ENCODE measurements at regions of chr1 and their contacts with region 1.

Region 1: DNA sequence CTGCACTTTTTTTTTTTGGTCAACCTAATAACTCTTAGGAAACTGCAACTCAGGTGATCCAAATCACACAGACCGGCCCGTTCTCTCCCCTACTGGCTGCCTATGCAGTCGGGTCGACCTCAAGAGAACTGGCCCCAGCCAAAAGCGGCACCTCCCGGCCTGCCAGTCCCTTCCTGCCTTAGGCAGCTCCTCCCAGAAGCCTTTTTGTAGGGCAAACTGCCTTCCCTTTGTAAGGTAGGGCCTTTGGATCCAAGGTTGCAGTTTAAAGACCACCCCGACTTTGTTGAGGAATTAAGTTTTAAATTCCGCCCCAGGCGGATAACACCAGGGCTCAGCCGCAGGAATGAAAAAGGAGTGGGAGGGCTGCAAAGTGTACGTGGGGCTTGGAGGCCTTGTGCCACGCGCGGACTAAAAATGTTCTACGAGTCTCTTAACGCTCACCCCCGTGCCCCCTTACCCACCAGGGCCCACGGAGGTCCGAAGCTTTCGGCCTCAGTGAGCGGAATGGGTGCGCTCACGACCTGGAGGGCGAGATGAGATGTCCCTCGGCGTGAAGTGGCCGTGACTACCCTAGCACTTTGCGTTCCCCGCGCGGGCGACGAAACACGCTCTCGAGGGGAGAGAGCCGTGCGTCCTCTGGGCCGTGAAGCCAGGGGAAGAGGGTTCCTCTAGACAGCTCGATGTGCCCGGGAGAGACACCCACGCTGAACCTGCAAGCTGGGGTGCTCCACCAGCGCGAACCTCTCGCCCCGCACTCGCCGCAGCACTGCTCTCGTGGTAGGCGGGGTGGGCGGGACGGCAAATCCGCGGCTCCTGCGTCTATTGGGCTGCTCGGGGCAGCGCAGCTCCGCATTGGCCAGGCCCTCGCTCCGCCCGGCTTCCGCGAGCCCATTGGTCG is 489 bp upstream of the ST3GAL3 start:
- DNase-seq: peak; percentile 89
- H3K4me3 ChIP-seq: peak overlapping the region; percentile 65 to 89 (median 67)
- H3K27ac ChIP-seq: peak overlapping the region; percentile 8
- H3K4me1 ChIP-seq: peaks cover 33% of the 10 kb centered on the region
- H3K27me3 ChIP-seq: no peaks in the 10 kb centered on the region
- CTCF ChIP-seq: no peak

Region 2: DNA sequence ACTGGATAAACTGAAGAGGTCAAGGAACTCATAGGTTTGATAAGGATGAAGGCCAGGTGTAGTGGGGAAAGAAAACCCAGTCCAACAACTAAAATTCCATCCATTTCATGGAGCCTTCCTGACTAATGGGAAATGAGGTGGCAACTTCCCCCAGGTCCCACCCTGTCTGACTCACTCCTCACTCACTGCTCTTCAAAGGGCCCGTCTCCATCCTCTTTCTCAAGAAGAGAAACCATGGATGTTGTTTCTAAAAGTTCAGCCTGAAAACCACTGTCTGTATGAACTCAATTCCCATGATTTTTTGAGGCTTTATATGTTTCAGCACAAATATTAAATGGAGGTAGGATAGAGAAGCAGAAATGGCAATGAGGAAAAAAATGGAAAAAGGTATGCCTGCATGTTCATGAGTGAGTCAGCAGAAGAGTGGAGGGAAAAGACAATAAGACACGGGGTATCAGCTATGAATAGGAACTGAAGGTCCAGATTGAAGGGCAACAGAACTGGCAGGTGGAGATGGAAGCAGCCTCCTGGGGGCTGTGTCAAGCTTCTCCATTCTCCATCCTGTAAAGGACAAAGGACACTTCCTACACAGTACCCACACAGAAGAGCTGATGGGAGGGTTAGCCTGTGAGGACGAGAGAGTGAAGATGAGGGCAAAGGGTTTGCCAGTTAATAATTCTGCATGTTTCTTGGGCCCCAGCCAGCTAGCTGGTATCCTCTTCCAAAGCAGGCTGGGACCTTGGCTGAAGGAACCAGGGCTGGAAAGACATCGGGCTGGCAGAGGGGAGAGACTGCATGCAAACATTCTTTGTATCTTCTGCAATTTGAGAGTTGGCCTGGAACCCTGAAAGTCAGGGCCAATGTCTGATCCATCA is 333.5 kb before region 1 on chr1:
- CTCF ChIA-PET with region 1: no interaction called
- dilution Hi-C with region 1: no loop called
- in situ Hi-C with region 1: no loop called
- intact Hi-C with region 1: loop called (anchors 10 kb)
- DNase-seq: peak; percentile 92
- H3K4me3 ChIP-seq: no peak overlapping the region
- H3K27ac ChIP-seq: peak overlapping the region; percentile 80
- H3K4me1 ChIP-seq: peaks cover 41% of the 10 kb centered on the region
- H3K27me3 ChIP-seq: no peaks in the 10 kb centered on the region
- CTCF ChIP-seq: no peak

Region 3: GRCh38 chr1:43402089-43402865 is 304.6 kb before region 1 on chr1:
- CTCF ChIA-PET with region 1: no interaction called
- dilution Hi-C with region 1: no loop called
- in situ Hi-C with region 1: no loop called
- intact Hi-C with region 1: no loop called
- DNase-seq: no peak
- H3K4me3 ChIP-seq: no peak overlapping the region
- H3K27ac ChIP-seq: no peak overlapping the region
- H3K4me1 ChIP-seq: peaks cover 6% of the 10 kb centered on the region
- H3K27me3 ChIP-seq: no peaks in the 10 kb centered on the region
- CTCF ChIP-seq: no peak

Region 4: DNA sequence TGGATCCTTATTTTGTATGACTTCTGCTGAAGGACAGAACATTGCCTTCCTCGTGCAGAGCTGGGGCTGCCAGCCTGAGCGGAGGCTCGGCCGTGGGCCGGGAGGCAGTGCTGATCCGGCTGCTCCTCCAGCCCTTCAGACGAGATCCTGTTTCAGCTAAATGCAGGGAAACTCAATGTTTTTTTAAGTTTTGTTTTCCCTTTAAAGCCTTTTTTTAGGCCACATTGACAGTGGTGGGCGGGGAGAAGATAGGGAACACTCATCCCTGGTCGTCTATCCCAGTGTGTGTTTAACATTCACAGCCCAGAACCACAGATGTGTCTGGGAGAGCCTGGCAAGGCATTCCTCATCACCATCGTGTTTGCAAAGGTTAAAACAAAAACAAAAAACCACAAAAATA is 84.4 kb before region 1 on chr1:
- CTCF ChIA-PET with region 1: no interaction called
- dilution Hi-C with region 1: loop called (anchors 5 kb)
- in situ Hi-C with region 1: no loop called
- intact Hi-C with region 1: no loop called
- DNase-seq: no peak
- H3K4me3 ChIP-seq: no peak overlapping the region
- H3K27ac ChIP-seq: no peak overlapping the region
- H3K4me1 ChIP-seq: no peaks in the 10 kb centered on the region
- H3K27me3 ChIP-seq: no peaks in the 10 kb centered on the region
- CTCF ChIP-seq: no peak

Region 5: DNA sequence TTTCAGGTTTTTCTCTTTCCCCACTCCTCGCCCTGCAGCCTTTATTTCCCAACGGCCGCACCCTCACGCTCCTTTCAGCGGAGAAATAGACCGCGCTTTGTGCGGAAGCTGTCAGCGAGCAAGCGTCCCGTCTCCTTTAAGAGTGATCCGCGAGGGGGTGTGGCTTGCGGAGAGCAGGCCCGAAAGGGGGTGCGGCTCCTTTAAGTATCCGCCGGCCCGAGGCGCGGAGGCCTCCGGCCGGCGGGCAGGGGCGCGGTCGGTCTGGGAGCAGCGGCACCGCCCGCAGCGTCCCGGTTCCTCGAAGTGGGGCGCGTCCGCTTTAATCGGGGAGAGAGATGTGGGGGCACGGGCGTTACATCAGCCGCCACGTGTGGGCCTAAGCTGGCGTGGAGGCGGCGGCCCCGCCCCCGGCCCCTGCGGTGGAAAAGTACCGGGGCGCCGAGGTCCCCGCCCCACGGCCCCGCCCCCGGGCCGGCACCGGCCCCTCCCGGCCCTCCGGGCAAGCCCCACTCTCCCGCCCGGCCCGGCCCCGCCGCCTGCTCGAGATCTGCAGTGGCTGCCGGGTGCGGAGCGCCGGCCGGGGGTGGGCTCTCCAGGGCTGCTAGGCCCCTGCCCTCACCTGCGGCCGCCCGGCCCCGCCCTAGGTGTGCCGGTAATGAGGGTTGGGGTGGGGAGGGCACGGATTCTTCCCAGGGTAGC is 323.2 kb after region 1 on chr1:
- CTCF ChIA-PET with region 1: no interaction called
- dilution Hi-C with region 1: no loop called
- in situ Hi-C with region 1: no loop called
- intact Hi-C with region 1: loop called (anchors 5 kb)
- DNase-seq: peak; percentile 88
- H3K4me3 ChIP-seq: peak overlapping the region; percentile 78 to 87 (median 83)
- H3K27ac ChIP-seq: peak overlapping the region; percentile 83
- H3K4me1 ChIP-seq: peaks cover 29% of the 10 kb centered on the region
- H3K27me3 ChIP-seq: no peaks in the 10 kb centered on the region
- CTCF ChIP-seq: no peak